ENCODE measurements at regions of chr3 and their contacts with region 1.

Region 1: GRCh38 chr3:195558602-195559001 is 15.5 kb upstream of the PPP1R2 start:
- DNase-seq: peak; percentile 41 to 82
- ATAC-seq: peak; percentile 89 to 94 (median 90)
- H3K4me3 ChIP-seq: no peak overlapping the region
- H3K27ac ChIP-seq: peak overlapping the region; percentile 81
- H3K4me1 ChIP-seq: peaks cover 22% of the 10 kb centered on the region
- H3K27me3 ChIP-seq: no peaks in the 10 kb centered on the region
- CTCF ChIP-seq: peak; percentile 65

Region 2: GRCh38 chr3:195403852-195404408 is 154.7 kb before region 1 on chr3:
- intact Hi-C with region 1: no loop called
- DNase-seq: no peak
- ATAC-seq: no peak
- H3K4me3 ChIP-seq: no peak overlapping the region
- H3K27ac ChIP-seq: no peak overlapping the region
- H3K4me1 ChIP-seq: no peaks in the 10 kb centered on the region
- H3K27me3 ChIP-seq: no peaks in the 10 kb centered on the region
- CTCF ChIP-seq: no peak

Region 3: GRCh38 chr3:195574497-195575304 is 16.1 kb after region 1 on chr3:
- intact Hi-C with region 1: loop called in 1 of 2 experiments (anchors 2 kb)
- DNase-seq: no peak
- ATAC-seq: peak; percentile 89 to 92 (median 90)
- H3K4me3 ChIP-seq: no peak overlapping the region
- H3K27ac ChIP-seq: peak overlapping the region; percentile 83
- H3K4me1 ChIP-seq: peaks cover 23% of the 10 kb centered on the region
- H3K27me3 ChIP-seq: no peaks in the 10 kb centered on the region
- CTCF ChIP-seq: no peak